ENCODE measurements at regions of chr11 and their contacts with region 1.

Region 1: GRCh38 chr11:102614485-102614884 is 10.6 kb downstream of the MMP20 start:
- DNase-seq: no peak
- CTCF ChIP-seq: peak; percentile 37

Region 2: GRCh38 chr11:102279641-102280170 is 334.8 kb before region 1 on chr11:
- CTCF ChIA-PET with region 1: interaction called, 13 read pairs
- POLR2A ChIA-PET with region 1: no interaction called
- DNase-seq: peak; percentile 60
- CTCF ChIP-seq: peak; percentile 0

Region 3: GRCh38 chr11:102367364-102367763 is 247.1 kb before region 1 on chr11:
- CTCF ChIA-PET with region 1: interaction called, 44 read pairs
- POLR2A ChIA-PET with region 1: no interaction called
- DNase-seq: no peak
- CTCF ChIP-seq: no peak

Region 4: DNA sequence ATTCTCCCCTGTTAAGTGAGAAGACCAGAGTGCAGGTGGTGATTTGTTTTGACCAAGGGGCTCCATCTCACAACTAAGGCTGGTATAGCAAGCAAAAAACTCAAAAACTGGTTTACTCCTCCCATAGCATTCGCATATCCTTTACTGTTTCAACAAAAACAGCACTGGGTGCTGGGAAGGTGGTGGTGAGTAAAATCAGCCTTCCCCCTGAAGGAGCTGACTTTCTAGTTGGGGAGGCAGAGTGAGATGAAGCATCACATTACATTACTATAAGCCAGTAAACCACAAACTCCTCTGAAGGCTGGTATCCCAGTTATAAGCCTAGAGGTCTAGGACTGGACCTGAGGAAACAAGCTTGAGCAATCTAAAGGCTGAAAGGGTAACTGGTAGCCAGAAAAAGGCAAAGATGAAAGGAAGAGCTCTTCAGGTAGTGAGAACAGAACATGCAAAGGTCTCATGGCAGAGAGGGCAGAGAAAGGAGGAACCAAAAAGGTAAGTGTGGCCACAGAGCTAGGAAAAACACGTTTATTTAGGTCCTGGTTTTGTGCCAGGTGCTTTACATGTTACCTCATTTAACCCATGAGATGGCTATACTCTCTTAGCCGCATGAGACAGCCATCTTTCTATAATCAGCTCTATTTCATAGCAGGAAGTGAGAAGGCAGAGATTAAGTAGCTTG is 184.2 kb before region 1 on chr11:
- CTCF ChIA-PET with region 1: interaction called, 11 read pairs
- POLR2A ChIA-PET with region 1: no interaction called
- DNase-seq: peak; percentile 60
- CTCF ChIP-seq: no peak

Region 5: DNA sequence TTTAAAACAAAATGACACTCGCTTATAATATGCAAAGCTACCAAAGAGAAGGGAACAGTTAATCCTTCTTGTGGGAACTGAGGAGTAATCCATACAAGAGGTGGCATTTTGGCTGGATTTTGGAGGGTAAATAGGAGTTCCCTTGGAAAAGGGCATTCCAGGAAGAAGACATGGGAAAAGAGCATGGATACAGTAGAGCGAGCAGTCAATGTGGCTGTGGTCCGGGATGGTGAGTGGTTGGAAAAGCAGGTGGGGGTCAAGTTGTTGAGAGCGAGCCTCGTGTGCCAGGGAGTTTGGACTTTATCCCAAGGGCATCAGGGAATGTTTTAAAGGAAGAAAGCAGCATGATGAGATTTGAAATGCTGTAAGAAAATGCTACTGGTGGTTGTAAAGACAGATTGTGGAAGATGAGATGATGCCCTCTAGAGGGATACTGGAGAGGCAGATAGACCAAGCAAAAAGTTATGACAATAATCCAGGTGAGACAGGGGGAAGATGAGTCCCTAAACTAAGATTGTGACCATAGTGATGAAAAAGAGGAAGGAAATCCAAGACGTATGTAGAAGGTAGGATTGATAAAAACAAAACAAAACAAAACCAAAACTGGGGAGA is 80.1 kb before region 1 on chr11:
- CTCF ChIA-PET with region 1: interaction called, 14 read pairs
- POLR2A ChIA-PET with region 1: no interaction called
- DNase-seq: peak; percentile 29
- CTCF ChIP-seq: peak; percentile 16

Region 6: GRCh38 chr11:102577182-102577581 is 37.3 kb before region 1 on chr11:
- CTCF ChIA-PET with region 1: interaction called, 50 read pairs
- POLR2A ChIA-PET with region 1: interaction called, 4 read pairs
- DNase-seq: no peak
- CTCF ChIP-seq: no peak